ENCODE measurements at regions of chr2 and their contacts with region 1.

Region 1: DNA sequence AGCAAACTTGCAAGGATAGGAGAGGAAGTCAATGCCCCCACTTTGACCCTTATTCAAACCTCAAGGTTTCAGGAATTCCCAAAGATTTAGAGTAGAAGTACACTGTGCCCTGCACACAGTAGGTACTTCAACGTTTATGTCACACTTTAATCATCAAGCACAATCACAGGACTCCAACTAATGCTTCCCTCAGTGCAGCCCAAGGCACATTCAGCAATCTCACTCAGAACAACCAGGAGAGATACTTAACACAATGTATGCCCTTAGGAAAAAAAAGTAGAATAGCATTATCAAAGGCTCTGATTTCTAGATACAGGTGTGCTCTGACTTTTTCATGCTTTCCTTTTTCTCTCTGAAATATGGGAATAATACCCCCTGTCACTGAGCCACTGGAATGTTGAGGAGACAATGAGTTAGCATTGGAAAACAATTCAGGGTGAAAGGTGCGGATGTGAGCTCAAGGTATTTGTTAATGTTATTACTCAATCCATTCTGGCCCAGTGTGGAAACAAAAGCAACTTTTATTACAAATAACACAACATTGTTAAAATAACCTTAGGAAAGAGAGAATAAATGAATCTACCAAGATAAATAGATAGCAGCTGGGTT is 228.1 kb downstream of the IKZF2 start:
- DNase-seq: no peak
- H3K4me3 Mint-ChIP-seq: no peak overlapping the region
- H3K27ac Mint-ChIP-seq: no peak overlapping the region
- H3K4me1 Mint-ChIP-seq: no peaks in the 10 kb centered on the region
- H3K27me3 Mint-ChIP-seq: peaks cover 5% of the 10 kb centered on the region

Region 2: DNA sequence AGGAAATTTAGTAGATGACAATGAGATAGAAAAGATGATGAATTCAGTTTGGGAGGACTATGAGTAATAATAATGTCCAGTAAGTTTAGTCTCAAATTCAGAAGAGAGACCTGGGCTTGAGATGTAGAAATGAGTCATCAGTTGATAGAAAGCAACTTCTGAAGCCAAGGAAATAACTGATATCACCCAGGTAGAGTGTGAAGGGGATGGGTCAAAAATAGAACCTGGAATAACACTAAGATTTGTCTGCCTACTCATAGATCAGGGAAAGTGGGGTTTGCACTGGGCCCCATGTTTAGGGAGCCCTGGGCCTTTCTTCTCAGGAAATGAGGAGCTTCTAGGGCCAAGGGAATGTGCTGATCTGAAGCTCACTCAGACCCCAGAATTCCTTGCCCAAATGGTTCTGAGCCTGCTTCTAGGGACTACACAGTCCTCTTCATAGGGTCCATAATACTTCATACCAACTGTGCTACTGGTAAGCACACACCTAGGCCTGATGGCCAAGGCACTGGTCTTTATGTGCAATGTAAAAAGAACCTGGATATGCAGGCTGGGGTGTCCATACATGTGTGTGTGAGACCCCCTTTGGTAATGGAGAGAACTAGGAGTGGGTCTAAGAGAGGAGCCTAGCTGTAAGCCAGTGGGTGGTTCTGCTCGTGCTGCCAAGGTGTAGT is 87.0 kb after region 1 on chr2:
- intact Hi-C with region 1: loop called (anchors 5 kb)
- DNase-seq: no peak
- H3K4me3 Mint-ChIP-seq: no peak overlapping the region
- H3K27ac Mint-ChIP-seq: no peak overlapping the region
- H3K4me1 Mint-ChIP-seq: peaks cover 10% of the 10 kb centered on the region
- H3K27me3 Mint-ChIP-seq: peaks cover 8% of the 10 kb centered on the region

Region 3: DNA sequence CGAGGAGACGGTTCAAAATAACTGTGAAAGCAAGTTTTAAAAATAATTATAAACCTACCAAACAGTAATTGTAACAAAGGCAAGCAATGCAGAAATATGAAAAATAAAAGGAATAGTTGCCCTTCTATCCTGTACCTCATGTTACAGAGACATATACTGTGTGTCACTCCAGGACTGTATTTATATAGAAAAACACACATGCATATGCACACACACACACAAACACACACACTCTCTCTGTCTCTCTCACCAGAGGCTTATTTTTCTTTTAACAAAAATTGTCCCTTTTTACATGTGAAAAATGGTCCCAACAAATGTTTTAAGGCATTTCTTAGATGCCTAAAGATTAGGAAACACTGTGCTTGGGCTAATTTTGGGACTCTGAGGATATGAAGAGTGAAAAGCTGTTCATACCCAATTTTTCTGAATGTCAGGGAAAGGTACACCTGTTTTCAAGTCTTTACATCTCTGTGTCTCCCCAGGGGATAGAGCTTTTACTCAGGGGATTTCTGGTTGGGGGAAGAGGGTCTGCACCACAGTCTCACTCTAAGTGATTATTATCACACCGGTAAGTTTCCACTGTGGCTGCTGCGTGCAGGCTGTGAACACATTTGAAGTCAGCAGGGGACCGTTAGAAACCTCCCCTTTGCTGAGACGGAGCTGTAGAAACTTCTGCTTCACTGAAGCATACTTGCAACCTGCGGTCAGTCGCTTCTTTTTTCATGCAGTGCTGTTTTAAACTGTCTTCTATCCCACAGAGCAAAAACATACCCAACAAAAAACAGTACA is 309.6 kb after region 1 on chr2:
- intact Hi-C with region 1: no loop called
- DNase-seq: peak; percentile 12
- H3K4me3 Mint-ChIP-seq: no peak overlapping the region
- H3K27ac Mint-ChIP-seq: peak overlapping the region; percentile 2
- H3K4me1 Mint-ChIP-seq: peaks cover 13% of the 10 kb centered on the region
- H3K27me3 Mint-ChIP-seq: peaks cover 10% of the 10 kb centered on the region

Measured in activated T-helper 1 cell treated with anti-CD3 and anti-CD28 coated beads, Interleukin-12 subunit alpha, Interleukin-12 subunit beta, Interleukin-2, Interleukin-4 antibody, amounts not matched to agents 30 ng/mL and 10 ng/mL and 1 ng/mL, durations not matched to agents 14 hours and 24 hours and 36 hours (primary cell).